Right ventricle myocardium inferior (tissue), 1 donor: ENCODE measurements at regions of chr9 and their contacts with region 1.

Region 1: DNA sequence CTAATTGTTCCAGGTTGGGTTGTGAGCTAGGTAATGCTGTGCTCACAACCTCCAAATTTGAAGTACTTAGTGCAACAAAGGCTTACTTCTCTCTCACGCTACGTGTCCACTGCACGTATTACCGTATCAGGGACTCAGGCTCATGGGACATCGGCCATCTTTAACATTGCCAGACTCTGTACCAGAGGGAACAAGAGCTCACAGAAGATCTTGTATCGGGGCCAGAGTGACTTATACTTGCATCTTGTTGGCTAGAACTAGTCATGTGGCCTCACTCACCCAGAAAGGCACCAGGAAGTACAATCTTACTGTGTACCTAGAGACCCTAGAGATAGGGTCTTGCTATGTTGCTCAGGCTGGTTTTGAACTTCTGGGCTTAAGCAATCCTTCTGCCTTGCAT is 81.1 kb upstream of the KLF9 start:
- DNase-seq: no peak
- ATAC-seq: peak; percentile 21

Region 2: GRCh38 chr9:70218767-70219166 is 276.7 kb before region 1 on chr9:
- intact Hi-C with region 1: no loop called
- DNase-seq: no peak
- ATAC-seq: no peak

Region 3: GRCh38 chr9:70578720-70579119 is 83.2 kb after region 1 on chr9:
- intact Hi-C with region 1: loop called (anchors 5 kb)
- DNase-seq: no peak
- ATAC-seq: no peak

Region 4: DNA sequence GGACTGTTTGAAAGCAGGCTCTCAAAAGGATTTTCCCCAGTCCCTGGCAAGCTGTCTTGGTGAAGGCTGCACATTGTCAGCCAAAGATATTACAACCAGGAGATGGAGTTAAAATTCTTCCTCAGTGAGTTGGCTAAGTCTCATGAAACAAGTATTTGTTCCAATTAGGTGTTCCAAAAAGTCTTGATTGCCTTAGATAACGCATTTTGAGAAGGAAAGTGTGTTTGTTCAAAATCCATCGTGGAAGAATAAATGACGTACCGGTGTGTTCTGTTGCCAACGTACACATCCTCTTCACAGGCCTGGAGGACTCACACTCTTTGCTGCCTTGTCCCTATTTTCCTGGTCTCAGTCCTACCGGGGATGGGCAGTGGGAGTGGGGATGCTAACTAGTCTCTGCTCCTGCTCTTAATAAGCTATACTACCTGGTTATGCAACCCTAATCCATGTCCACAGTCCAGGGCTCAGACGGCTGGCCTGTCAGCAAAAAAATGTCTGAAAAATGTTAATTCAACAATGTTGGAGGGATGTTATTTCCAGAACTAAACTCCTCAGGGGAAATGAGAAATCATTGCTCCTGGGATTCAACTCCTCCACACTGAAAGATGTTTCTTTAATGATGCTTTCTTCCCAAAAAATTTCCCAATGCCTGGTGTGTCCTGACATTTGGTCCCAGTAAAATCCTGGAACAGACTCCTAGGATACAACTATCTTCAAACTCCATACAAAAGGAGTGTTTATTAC is 94.2 kb after region 1 on chr9:
- intact Hi-C with region 1: no loop called
- DNase-seq: no peak
- ATAC-seq: peak; percentile 88

Region 5: GRCh38 chr9:70609542-70610286 is 114.2 kb after region 1 on chr9:
- intact Hi-C with region 1: no loop called
- DNase-seq: no peak
- ATAC-seq: peak; percentile 57

Region 6: GRCh38 chr9:71162126-71162525 is 666.6 kb after region 1 on chr9:
- intact Hi-C with region 1: no loop called
- DNase-seq: no peak
- ATAC-seq: no peak